Activated CD4-positive, alpha-beta T cell treated with anti-CD3 and anti-CD28 coated beads for 36 hours (primary cell): ENCODE measurements at regions of chr7 and their contacts with region 1.

Region 1: GRCh38 chr7:91636129-91636724 is 244.3 kb downstream of the MTERF1 start:
- DNase-seq: peak; percentile 23
- ATAC-seq: peak; percentile 49
- H3K4me3 Mint-ChIP-seq: no peak overlapping the region
- H3K27ac Mint-ChIP-seq: no peak overlapping the region
- H3K4me1 Mint-ChIP-seq: no peaks in the 10 kb centered on the region
- H3K27me3 Mint-ChIP-seq: no peaks in the 10 kb centered on the region

Region 2: GRCh38 chr7:91082852-91083495 is 553.3 kb before region 1 on chr7:
- CTCF ChIA-PET with region 1: no interaction called
- POLR2A ChIA-PET with region 1: no interaction called
- intact Hi-C with region 1: loop called (anchors 1 to 5 kb)
- DNase-seq: no peak
- ATAC-seq: peak; percentile 10
- H3K4me3 Mint-ChIP-seq: peak overlapping the region; percentile 16
- H3K27ac Mint-ChIP-seq: no peak overlapping the region
- H3K4me1 Mint-ChIP-seq: peaks cover 32% of the 10 kb centered on the region
- H3K27me3 Mint-ChIP-seq: peaks cover 1% of the 10 kb centered on the region

Region 3: GRCh38 chr7:91089382-91089963 is 546.8 kb before region 1 on chr7:
- CTCF ChIA-PET with region 1: no interaction called
- POLR2A ChIA-PET with region 1: no interaction called
- intact Hi-C with region 1: loop called in 1 of 2 experiments (anchors 5 kb)
- DNase-seq: peak; percentile 14
- ATAC-seq: peak; percentile 51
- H3K4me3 Mint-ChIP-seq: no peak overlapping the region
- H3K27ac Mint-ChIP-seq: no peak overlapping the region
- H3K4me1 Mint-ChIP-seq: peaks cover 22% of the 10 kb centered on the region
- H3K27me3 Mint-ChIP-seq: no peaks in the 10 kb centered on the region

Region 4: DNA sequence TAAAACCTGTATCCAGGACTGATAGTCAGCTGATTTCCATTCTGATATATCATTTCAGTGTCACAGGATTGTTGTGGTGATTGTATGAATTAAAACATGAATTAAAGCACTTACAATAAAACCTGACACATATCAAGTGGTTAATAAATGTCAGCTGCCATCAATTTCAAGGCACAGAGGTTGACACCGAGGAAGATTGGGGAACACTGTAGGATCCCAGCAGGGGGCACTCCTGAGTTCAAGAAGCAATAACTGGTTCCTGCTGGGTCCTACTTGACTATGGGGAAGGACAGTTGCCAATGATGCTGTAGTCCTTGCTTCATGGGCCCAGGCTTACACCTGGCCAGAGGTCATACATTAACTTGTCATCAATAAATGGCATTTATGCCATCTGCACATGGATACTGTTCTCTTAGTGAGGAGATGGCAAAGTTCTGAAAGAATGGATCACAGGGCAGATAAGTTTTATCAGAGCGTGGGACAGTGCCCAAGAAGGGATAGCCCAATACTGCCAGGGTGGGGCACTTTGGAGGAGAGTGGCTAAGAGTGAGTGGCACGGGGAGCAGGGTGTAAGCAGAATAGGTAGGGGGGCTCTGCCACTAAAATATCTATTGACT is 347.9 kb before region 1 on chr7:
- CTCF ChIA-PET with region 1: no interaction called
- POLR2A ChIA-PET with region 1: no interaction called
- intact Hi-C with region 1: loop called (anchors 1 to 10 kb)
- DNase-seq: peak; percentile 57
- ATAC-seq: no peak
- H3K4me3 Mint-ChIP-seq: no peak overlapping the region
- H3K27ac Mint-ChIP-seq: no peak overlapping the region
- H3K4me1 Mint-ChIP-seq: no peaks in the 10 kb centered on the region
- H3K27me3 Mint-ChIP-seq: peaks cover 2% of the 10 kb centered on the region

Region 5: DNA sequence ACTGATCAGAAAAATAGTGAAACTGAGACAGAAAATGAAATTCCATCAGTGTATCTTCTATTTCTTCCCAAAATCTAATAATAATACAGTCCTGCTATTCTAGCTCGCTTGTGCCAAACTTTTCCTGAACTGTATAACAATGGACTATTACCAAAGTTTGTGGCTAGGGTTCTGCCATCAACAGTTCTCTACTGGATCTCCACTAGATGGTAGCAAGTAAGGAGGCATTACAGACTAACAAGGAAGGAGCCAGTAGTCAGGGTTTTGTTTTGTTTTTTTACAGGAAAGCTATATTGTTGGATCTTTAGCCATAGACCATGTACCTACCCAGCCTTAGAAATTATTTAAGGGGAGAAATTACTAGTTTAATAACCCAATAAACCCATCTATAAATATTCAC is 233.4 kb after region 1 on chr7:
- CTCF ChIA-PET with region 1: no interaction called
- POLR2A ChIA-PET with region 1: no interaction called
- intact Hi-C with region 1: no loop called
- DNase-seq: no peak
- ATAC-seq: no peak
- H3K4me3 Mint-ChIP-seq: no peak overlapping the region
- H3K27ac Mint-ChIP-seq: no peak overlapping the region
- H3K4me1 Mint-ChIP-seq: peaks cover 4% of the 10 kb centered on the region
- H3K27me3 Mint-ChIP-seq: no peaks in the 10 kb centered on the region